ENCODE measurements at regions of chr6 and their contacts with region 1.

Region 1: DNA sequence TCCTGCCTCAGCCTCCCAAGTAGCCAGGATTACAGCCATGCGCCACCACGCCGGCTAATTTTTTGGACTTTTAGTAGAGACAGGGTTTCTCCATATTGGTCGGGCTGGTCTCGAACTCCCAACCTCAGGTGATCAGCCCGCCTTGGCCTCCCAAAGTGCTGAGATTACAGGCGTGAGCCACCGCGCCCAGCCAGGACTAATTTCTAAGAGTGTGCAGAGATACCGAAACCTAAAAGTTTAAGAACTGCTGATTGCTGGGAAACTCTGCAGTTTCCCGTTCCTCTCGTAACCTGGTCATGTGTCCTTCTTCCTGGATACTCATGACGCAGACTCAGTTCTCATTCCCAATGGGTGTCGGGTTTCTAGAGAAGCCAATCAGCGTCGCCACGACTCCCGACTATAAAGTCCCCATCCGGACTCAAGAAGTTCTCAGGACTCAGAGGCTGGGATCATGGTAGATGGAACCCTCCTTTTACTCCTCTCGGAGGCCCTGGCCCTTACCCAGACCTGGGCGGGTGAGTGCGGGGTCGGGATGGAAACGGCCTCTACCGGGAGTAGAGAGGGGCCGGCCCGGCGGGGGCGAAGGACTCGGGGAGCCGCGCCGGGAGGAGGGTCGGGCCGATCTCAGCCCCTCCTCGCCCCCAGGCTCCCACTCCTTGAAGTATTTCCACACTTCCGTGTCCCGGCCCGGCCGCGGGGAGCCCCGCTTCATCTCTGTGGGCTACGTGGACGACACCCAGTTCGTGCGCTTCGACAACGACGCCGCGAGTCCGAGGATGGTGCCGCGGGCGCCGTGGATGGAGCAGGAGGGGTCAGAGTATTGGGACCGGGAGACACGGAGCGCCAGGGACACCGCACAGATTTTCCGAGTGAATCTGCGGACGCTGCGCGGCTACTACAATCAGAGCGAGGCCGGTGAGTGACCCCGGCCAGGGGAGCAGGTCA is at the start of gene HLA-E:
- DNase-seq: peak in 1 of 2 donors; percentile 99
- H3K4me3 ChIP-seq: peak within 1 kb of the TSS; percentile 98 to 100
- H3K27ac ChIP-seq: peak within 1 kb of the TSS; percentile 100
- H3K4me1 ChIP-seq: peaks cover 44% of the 10 kb centered on the region
- H3K27me3 ChIP-seq: no peaks in the 10 kb centered on the region
- CTCF ChIP-seq: peak in 1 of 3 experiments; percentile 4
- POLR2A ChIP-seq: peak; percentile 84 to 99
- total RNA-seq, gene HLA-E: 618 TPM

Region 2: GRCh38 chr6:30533460-30534294 is 44.3 kb after region 1 on chr6:
- intact Hi-C with region 1: loop called (anchors 5 kb)
- DNase-seq: no peak
- H3K4me3 ChIP-seq: no peak overlapping the region
- H3K27ac ChIP-seq: no peak overlapping the region
- H3K4me1 ChIP-seq: peaks cover 8% of the 10 kb centered on the region
- H3K27me3 ChIP-seq: no peaks in the 10 kb centered on the region
- CTCF ChIP-seq: no peak
- POLR2A ChIP-seq: no peak

Measured in vagina (tissue), 2 donors.